Naive thymus-derived CD4-positive, alpha-beta T cell (primary cell): ENCODE measurements at regions of chr16 and their contacts with region 1.

Region 1: GRCh38 chr16:62298600-62298999 is 262.4 kb upstream of the CDH8 start:
- DNase-seq: no peak
- ATAC-seq: no peak
- H3K4me3 ChIP-seq: no peak overlapping the region
- H3K4me3 Mint-ChIP-seq: no peak overlapping the region
- H3K27ac ChIP-seq: no peak overlapping the region
- H3K27ac Mint-ChIP-seq: no peak overlapping the region
- H3K4me1 ChIP-seq: no peaks in the 10 kb centered on the region
- H3K4me1 Mint-ChIP-seq: no peaks in the 10 kb centered on the region
- H3K27me3 ChIP-seq: no peaks in the 10 kb centered on the region
- H3K27me3 Mint-ChIP-seq: no peaks in the 10 kb centered on the region

Region 2: GRCh38 chr16:62256406-62256805 is 42.2 kb before region 1 on chr16:
- CTCF ChIA-PET with region 1: no interaction called
- POLR2A ChIA-PET with region 1: no interaction called
- intact Hi-C with region 1: no loop called
- DNase-seq: no peak
- ATAC-seq: no peak
- H3K4me3 ChIP-seq: no peak overlapping the region
- H3K4me3 Mint-ChIP-seq: no peak overlapping the region
- H3K27ac ChIP-seq: no peak overlapping the region
- H3K27ac Mint-ChIP-seq: no peak overlapping the region
- H3K4me1 ChIP-seq: no peaks in the 10 kb centered on the region
- H3K4me1 Mint-ChIP-seq: no peaks in the 10 kb centered on the region
- H3K27me3 ChIP-seq: no peaks in the 10 kb centered on the region
- H3K27me3 Mint-ChIP-seq: no peaks in the 10 kb centered on the region

Region 3: DNA sequence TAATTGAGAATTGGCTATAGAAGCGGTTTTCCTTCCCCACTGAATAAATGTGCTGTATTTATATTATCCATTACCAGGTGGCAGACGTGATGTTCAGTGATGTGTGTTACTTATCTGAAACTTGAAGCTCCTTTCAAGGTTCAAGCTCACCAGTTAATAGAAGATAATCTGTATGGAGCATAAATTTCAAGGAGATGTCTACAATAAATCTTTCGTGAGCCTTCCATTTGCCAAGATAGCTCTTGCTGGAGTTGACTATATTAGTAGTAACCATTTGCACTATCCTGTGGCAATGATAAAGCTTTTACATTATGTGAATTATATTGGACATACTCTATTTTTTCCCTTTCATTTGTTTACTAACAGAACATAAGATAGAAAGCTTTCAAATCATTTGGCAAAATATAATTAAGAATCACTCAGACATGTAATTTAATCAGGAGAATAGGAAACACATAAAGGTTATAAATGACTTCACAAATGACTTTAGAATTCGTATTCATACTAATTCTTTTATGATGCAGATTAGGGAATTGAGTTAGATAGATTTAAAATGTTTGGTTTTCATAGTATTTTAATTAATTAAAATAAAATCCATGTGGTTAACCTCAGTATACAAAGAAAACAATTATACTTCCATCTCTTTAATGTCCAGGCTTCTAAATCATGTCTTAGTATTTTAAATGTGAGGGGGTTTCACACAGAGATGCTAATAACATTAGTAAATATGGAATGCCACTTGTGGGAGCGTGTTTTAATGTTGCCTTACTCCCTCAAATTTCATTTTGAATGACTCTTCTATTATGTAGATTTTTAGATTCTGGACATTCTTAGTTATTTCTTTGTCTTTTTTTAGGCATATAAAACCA is 402.1 kb after region 1 on chr16:
- CTCF ChIA-PET with region 1: no interaction called
- POLR2A ChIA-PET with region 1: no interaction called
- intact Hi-C with region 1: loop called in 1 of 2 experiments (anchors 5 kb)
- DNase-seq: no peak
- ATAC-seq: no peak
- H3K4me3 ChIP-seq: no peak overlapping the region
- H3K4me3 Mint-ChIP-seq: no peak overlapping the region
- H3K27ac ChIP-seq: no peak overlapping the region
- H3K27ac Mint-ChIP-seq: no peak overlapping the region
- H3K4me1 ChIP-seq: no peaks in the 10 kb centered on the region
- H3K4me1 Mint-ChIP-seq: no peaks in the 10 kb centered on the region
- H3K27me3 ChIP-seq: no peaks in the 10 kb centered on the region
- H3K27me3 Mint-ChIP-seq: no peaks in the 10 kb centered on the region